Aorta (tissue), 5 donors: ENCODE measurements at regions of chr6 and their contacts with region 1.

Region 1: DNA sequence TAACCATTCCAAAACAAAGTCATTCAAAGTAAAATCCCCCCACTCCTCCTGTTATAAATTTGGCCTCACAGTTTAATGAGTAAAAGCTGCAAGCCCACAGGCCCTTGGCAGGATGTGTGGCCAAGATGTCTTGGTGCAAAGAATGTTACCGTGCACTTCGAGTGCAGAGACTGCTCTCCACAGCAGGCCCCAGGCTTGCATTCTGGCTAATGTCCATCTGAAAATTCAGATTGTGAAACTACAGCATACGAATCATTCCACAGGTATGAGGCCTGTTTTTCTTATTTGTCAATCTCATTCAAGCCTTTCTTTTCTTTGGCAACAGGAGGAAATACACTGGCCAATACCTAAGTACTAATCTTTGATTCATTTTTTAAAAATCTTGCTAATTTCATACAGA is 7.1 kb downstream of the RPS6KA2 start:
- DNase-seq: peak in 1 of 2 donors; percentile 71
- ATAC-seq: peak; percentile 70
- H3K4me3 ChIP-seq: no peak overlapping the region
- H3K27ac ChIP-seq: no peak overlapping the region
- H3K4me1 ChIP-seq: peaks cover 0 to 4% of the 10 kb centered on the region in 2 donors
- H3K27me3 ChIP-seq: no peaks in the 10 kb centered on the region

Region 2: GRCh38 chr6:166466178-166467122 is 153.5 kb before region 1 on chr6:
- intact Hi-C with region 1: loop called (anchors 5 to 10 kb)
- DNase-seq: no peak
- ATAC-seq: peak; percentile 47
- H3K4me3 ChIP-seq: no peak overlapping the region
- H3K27ac ChIP-seq: peak overlapping the region in 1 of 2 donors; percentile 65
- H3K4me1 ChIP-seq: no peaks in the 10 kb centered on the region
- H3K27me3 ChIP-seq: no peaks in the 10 kb centered on the region

Region 3: GRCh38 chr6:166556871-166557322 is 63.0 kb before region 1 on chr6:
- intact Hi-C with region 1: loop called (anchors 2 to 5 kb)
- DNase-seq: peak; percentile 94 to 96
- ATAC-seq: peak; percentile 94
- H3K4me3 ChIP-seq: no peak overlapping the region
- H3K27ac ChIP-seq: peak overlapping the region in 1 of 2 donors; percentile 9
- H3K4me1 ChIP-seq: peaks cover 0 to 4% of the 10 kb centered on the region in 2 donors
- H3K27me3 ChIP-seq: no peaks in the 10 kb centered on the region